GM10248 (cell line): ENCODE measurements at regions of chr10 and their contacts with region 1.

Region 1: DNA sequence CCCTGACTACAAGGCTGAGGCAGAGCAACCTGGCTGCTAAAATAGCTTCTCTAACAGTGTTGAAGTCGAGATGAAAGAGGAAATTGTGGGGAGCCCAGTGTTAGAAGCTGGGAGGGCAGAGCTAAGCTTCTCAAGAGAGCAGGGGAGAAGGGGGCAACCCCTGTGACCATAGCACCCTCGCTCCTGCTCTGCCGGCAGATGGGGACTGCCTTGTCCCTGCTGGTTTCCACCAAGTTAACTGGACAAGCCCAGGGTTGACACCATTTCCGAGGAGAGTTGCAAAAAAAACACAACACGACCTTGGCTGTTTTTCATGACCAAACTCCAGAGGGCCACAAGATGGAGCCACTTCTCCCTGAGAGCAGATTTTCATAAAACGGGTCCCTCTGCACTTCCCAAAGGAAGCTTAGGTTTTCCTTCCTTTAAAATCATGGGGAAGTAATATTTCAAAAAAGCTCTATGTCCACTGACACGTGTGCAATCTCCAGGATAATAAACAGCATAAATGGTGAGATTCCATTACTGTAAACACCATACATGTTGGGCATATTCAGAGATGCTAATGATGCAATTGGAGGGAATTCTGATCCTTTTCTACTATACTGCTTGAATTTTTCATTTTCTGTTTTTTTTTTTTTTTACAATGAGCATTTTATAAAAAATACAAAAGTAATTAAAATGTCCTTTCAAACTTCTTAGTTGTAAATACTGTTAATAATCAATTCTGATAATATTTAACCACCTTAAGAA is 140.4 kb downstream of the PIP4K2A start:
- DNase-seq: no peak
- CTCF ChIP-seq: no peak

Region 2: DNA sequence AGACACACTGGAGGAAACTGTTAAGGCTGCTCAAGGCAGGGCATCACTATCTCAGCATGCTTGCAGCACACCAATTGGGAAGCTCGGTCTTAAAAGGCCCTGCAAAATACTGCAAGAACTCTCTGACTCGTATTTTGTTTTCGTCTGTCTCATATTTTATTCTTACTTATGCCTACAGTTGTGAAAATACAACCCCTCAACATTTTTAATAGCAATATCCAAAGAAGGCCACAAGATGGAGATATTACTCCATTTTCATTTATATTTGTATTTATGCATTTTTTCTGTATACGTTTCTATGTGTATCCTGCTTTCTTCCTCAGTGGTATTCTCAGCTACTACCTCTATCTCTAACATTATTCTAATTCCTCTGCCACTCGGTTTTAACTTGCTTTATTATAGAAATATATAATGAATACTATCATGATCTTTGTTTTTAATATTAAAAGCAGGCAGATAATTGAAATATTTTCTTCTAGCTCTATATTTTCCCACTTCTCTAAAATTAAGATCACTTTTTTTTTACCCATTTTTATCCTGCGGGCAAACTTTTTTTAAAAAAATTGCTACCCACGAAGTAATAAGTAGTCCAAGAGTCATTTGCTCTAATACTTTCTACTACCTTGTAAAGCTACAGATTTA is 580.5 kb before region 1 on chr10:
- CTCF ChIA-PET with region 1: interaction called, 10 read pairs
- POLR2A ChIA-PET with region 1: no interaction called
- DNase-seq: peak; percentile 20
- CTCF ChIP-seq: peak; percentile 46